ENCODE measurements at regions of chr1 and their contacts with region 1.

Region 1: DNA sequence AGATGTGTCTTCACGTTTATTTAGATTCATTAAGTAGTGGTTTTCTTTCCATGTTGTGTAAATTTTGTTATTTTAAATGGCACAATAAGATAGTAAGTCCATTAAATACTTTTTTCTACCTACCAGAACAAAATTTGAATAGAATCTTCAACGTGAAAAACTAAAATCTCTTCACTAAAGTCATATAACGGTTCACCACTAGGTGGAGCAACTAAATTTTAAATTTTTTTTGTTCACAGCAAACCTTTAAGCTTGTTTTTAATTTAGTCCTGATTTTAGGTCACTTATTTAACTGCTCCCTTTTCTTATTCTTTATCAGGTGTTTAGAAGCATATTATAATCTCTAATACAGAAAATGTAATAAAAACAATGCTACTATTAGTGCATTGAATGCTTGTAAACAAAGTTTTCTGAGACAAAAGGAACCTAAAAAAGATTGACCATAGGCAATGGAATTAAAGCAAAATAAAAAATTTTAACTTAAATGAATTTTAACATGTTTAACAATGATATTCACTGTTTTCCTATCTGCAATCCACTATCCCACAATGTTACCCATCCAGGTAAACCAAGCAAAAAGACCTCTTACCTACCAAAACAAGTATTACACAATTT is 28.3 kb upstream of the PKN2 start:
- DNase-seq: no peak
- H3K4me3 ChIP-seq: no peak overlapping the region
- H3K27ac ChIP-seq: no peak overlapping the region
- H3K4me1 ChIP-seq: no peaks in the 10 kb centered on the region
- H3K27me3 ChIP-seq: no peaks in the 10 kb centered on the region
- CTCF ChIP-seq: peak; percentile 33 to 84 (median 45)
- POLR2A ChIP-seq: no peak

Region 2: GRCh38 chr1:88371396-88371795 is 284.4 kb before region 1 on chr1:
- intact Hi-C with region 1: no loop called
- DNase-seq: no peak
- H3K4me3 ChIP-seq: no peak overlapping the region
- H3K27ac ChIP-seq: no peak overlapping the region
- H3K4me1 ChIP-seq: no peaks in the 10 kb centered on the region
- H3K27me3 ChIP-seq: no peaks in the 10 kb centered on the region
- CTCF ChIP-seq: no peak
- POLR2A ChIP-seq: no peak

Region 3: DNA sequence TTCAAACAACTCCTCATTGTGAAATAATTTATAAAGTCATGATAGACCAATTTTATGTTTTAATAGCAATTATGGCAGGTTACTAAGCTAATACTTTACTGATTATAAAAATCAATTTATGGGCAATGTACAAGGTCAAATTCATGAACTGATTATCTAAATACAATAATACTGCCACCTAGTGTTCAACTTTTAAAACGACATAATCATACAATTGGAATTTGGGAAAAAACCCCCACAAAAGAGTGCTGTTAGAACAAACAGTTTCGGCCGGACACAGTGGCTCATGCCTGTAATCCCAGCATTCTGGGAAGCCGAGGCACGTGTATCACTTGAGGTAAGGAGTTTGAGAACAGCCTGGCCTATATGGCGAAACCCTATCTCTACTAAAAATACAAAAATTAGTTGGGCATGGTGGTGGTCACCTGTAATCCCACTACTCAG is 221.6 kb after region 1 on chr1:
- intact Hi-C with region 1: loop called (anchors 10 kb)
- DNase-seq: no peak
- H3K4me3 ChIP-seq: no peak overlapping the region
- H3K27ac ChIP-seq: no peak overlapping the region
- H3K4me1 ChIP-seq: peaks cover 7% of the 10 kb centered on the region
- H3K27me3 ChIP-seq: no peaks in the 10 kb centered on the region
- CTCF ChIP-seq: peak; percentile 30 to 76 (median 41)
- POLR2A ChIP-seq: no peak

Measured in testis (tissue), 5 donors.